Lower leg skin (tissue), 4 donors: ENCODE measurements at regions of chr5 and their contacts with region 1.

Region 1: GRCh38 chr5:40669606-40670390 is 9.9 kb upstream of the PTGER4 start:
- DNase-seq: no peak
- H3K4me3 ChIP-seq: no peak overlapping the region
- CTCF ChIP-seq: no peak
- POLR2A ChIP-seq: no peak

Region 2: DNA sequence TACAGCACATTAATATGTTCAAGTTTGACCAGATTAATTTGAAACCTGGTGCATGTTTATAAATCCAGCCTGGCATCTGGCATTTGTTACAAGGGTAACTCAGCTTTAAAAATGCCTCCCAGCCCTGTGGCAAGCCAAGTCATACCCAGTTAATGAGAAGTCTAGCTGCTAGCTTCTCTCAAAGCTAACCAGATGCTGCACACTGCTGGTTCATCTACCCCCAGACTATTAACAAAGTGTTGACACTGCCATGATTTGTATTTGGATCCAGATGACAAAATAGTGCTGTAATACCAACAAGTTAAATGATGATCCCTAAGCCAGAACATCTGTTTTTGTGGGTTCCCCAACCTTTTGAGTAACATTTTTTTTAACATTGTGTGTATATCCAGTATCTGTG is 671.3 kb before region 1 on chr5:
- intact Hi-C with region 1: loop called (anchors 5 kb)
- DNase-seq: no peak
- H3K4me3 ChIP-seq: no peak overlapping the region
- CTCF ChIP-seq: no peak
- POLR2A ChIP-seq: no peak

Region 3: GRCh38 chr5:40428126-40428525 is 241.7 kb before region 1 on chr5:
- intact Hi-C with region 1: no loop called
- DNase-seq: peak in 1 of 2 donors; percentile 49
- H3K4me3 ChIP-seq: no peak overlapping the region
- CTCF ChIP-seq: no peak
- POLR2A ChIP-seq: no peak

Region 4: GRCh38 chr5:40619421-40619820 is 50.4 kb before region 1 on chr5:
- intact Hi-C with region 1: no loop called
- DNase-seq: no peak
- H3K4me3 ChIP-seq: no peak overlapping the region
- CTCF ChIP-seq: no peak
- POLR2A ChIP-seq: no peak